Activated CD4-positive, alpha-beta memory T cell treated with anti-CD3 and anti-CD28 coated beads for 36 hours (primary cell): ENCODE measurements at regions of chr21 and their contacts with region 1.

Region 1: DNA sequence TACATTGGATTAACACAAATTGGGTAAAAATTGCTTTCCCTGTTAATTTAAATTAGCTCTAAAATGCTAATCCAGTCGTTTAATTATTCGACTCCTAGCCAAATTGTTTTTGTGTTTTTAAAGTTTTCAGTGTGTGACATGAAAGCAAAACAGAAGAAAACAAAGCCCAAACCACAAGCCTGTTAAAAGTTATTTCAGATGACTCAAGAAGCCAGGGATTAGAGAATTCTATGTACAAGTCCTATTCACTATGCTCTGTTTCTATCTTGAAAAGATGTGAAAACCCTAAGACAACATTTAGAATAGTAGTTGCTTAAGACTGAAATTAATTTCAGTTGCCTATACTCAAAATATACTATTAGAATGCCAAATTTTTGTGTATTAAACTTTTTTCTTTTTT is 294.8 kb upstream of the ADAMTS5 start:
- DNase-seq: no peak
- H3K4me3 Mint-ChIP-seq: no peak overlapping the region
- H3K27ac Mint-ChIP-seq: no peak overlapping the region
- H3K4me1 Mint-ChIP-seq: no peaks in the 10 kb centered on the region
- H3K27me3 Mint-ChIP-seq: no peaks in the 10 kb centered on the region

Region 2: GRCh38 chr21:27240839-27241238 is 20.8 kb before region 1 on chr21:
- CTCF ChIA-PET with region 1: no interaction called
- POLR2A ChIA-PET with region 1: no interaction called
- intact Hi-C with region 1: loop called (anchors 1 kb)
- DNase-seq: no peak
- H3K4me3 Mint-ChIP-seq: no peak overlapping the region
- H3K27ac Mint-ChIP-seq: no peak overlapping the region
- H3K4me1 Mint-ChIP-seq: no peaks in the 10 kb centered on the region
- H3K27me3 Mint-ChIP-seq: no peaks in the 10 kb centered on the region

Region 3: DNA sequence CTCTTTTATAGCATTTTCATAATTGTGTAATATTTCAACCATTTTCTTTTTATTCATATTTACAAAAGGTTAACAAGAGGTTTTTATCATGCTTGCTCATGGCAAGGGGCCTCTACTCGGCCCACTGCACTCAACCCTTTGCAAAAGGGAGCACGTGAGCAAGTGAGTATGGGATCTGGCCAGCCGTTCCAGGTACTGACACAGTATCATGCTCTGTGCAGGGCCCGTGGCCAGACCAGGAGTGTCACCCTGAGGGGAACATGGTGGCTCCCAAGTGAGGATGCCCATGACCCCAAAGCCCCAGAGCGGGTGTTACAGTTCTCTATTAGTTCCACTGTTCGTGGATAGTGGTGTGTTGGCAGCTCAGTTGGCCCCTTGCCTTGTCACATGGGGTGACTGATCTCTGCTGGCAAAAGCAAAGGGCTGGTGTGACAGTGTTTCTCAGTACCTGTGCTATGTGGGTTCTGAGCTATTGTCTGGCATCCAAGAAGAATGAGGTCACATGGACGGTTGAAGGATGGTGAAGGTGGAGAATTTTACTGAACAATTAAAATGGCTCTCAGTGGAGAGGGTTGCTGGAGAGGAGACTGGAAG is 482.4 kb after region 1 on chr21:
- CTCF ChIA-PET with region 1: no interaction called
- POLR2A ChIA-PET with region 1: no interaction called
- intact Hi-C with region 1: no loop called
- DNase-seq: no peak
- H3K4me3 Mint-ChIP-seq: no peak overlapping the region
- H3K27ac Mint-ChIP-seq: no peak overlapping the region
- H3K4me1 Mint-ChIP-seq: no peaks in the 10 kb centered on the region
- H3K27me3 Mint-ChIP-seq: no peaks in the 10 kb centered on the region